Activated CD4-positive, alpha-beta T cell treated with anti-CD3 and anti-CD28 coated beads for 36 hours (primary cell): ENCODE measurements at regions of chr3 and their contacts with region 1.

Region 1: DNA sequence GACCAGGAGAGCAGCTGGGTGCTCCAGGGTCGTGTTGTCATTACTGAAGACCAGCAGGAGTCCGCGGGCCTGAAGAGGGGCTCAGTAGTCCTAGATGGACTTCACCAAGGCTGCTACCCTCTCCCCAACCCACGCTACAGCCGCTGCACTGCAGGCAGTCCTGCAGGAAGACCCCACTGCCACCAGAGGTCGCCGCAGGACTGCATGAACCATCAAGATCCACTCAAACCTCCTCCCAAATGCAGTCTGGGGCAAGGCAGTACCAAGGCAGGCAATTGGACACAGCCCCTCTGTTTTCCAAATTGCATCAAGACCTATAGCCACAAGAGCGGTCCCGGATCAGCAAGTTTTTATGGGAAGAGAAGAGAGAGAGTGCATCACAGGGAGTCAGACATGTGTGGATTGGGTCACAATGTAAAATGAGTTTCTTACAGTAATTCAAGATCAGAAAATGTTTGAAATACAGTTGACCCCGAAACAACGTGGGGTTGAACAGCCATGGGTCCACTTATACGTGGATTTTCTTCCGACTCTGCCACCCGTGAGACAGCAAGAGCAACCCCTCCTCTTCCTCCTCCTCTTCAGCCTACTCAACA is 46.7 kb downstream of the DZIP1L start:
- DNase-seq: peak; percentile 90
- ATAC-seq: peak; percentile 55
- H3K4me3 Mint-ChIP-seq: no peak overlapping the region
- H3K27ac Mint-ChIP-seq: no peak overlapping the region
- H3K4me1 Mint-ChIP-seq: peaks cover 14% of the 10 kb centered on the region
- H3K27me3 Mint-ChIP-seq: peaks cover 18% of the 10 kb centered on the region

Region 2: DNA sequence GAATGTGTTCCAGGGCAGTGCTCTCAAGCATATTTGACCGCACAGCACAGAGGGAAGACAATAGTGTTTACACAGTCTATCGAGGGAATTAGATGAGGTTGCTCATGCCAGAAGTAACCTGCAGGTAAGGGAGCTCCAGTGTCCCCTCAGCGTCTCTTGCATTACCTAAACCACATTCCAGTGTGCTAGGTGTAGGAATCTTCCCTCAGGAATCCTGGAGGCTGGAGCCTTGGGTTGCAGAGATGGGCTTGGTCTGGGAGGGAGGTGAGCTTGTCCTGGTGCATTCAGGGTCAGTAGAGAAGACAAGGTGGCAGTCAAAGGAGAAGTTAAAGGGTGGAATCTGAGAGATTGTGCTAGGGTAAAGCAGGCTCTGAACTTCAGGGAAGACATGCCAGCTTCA is 248.3 kb before region 1 on chr3:
- CTCF ChIA-PET with region 1: no interaction called
- POLR2A ChIA-PET with region 1: no interaction called
- intact Hi-C with region 1: no loop called
- DNase-seq: no peak
- ATAC-seq: no peak
- H3K4me3 Mint-ChIP-seq: no peak overlapping the region
- H3K27ac Mint-ChIP-seq: no peak overlapping the region
- H3K4me1 Mint-ChIP-seq: no peaks in the 10 kb centered on the region
- H3K27me3 Mint-ChIP-seq: peaks cover 6% of the 10 kb centered on the region

Region 3: GRCh38 chr3:138082085-138082991 is 13.7 kb after region 1 on chr3:
- CTCF ChIA-PET with region 1: interaction called, 12 read pairs
- POLR2A ChIA-PET with region 1: no interaction called
- intact Hi-C with region 1: loop called (anchors 1 to 2 kb)
- DNase-seq: peak; percentile 38
- ATAC-seq: peak; percentile 80
- H3K4me3 Mint-ChIP-seq: peak overlapping the region; percentile 1
- H3K27ac Mint-ChIP-seq: peak overlapping the region; percentile 11
- H3K4me1 Mint-ChIP-seq: peaks cover 36% of the 10 kb centered on the region
- H3K27me3 Mint-ChIP-seq: peaks cover 4% of the 10 kb centered on the region

Region 4: GRCh38 chr3:138118612-138119422 is 50.1 kb after region 1 on chr3:
- CTCF ChIA-PET with region 1: interaction called, 42 read pairs
- POLR2A ChIA-PET with region 1: no interaction called
- intact Hi-C with region 1: loop called (anchors 1 kb)
- DNase-seq: peak; percentile 77
- ATAC-seq: peak; percentile 72
- H3K4me3 Mint-ChIP-seq: no peak overlapping the region
- H3K27ac Mint-ChIP-seq: no peak overlapping the region
- H3K4me1 Mint-ChIP-seq: peaks cover 4% of the 10 kb centered on the region
- H3K27me3 Mint-ChIP-seq: peaks cover 20% of the 10 kb centered on the region

Region 5: DNA sequence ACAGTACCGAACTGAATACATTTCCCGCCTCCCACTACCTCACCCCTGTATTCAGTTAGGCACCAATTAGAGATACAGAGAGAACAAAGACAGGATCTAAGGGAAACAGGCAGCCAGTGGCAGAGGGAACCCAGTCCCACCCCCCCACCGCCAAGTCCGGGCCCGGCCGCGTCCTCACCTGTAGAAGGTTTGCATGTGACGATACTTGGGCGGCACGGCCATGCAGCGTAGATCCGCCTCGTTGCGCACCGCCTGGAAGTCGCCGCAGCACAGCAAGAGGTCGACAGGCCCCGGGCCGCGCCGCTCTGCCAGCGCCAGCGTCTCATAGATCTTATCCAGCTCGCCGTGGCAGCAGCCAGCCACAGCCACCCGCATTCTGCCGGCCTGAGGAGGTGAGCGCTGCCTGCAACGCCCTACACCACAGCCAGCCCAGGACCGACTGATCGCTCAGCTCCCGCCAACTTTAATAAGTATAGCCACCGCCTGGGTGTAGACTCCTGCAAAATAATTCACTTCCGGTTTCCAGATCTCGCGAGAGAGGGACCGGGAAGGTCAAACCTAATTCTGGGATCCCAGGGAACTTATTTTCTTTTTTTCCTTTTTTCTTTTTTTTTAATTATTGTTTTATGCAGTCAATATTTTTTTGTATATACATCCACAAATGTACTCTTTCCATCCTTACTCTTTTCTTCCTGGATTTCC is 105.9 kb after region 1 on chr3 and contains the start of gene DBR1:
- CTCF ChIA-PET with region 1: interaction called, 3 read pairs
- POLR2A ChIA-PET with region 1: no interaction called
- intact Hi-C with region 1: loop called (anchors 2 to 5 kb)
- DNase-seq: peak; percentile 85
- ATAC-seq: peak; percentile 85
- H3K4me3 Mint-ChIP-seq: peak within 1 kb of the TSS; percentile 89
- H3K27ac Mint-ChIP-seq: peak within 1 kb of the TSS; percentile 96
- H3K4me1 Mint-ChIP-seq: peaks cover 30% of the 10 kb centered on the region
- H3K27me3 Mint-ChIP-seq: no peaks in the 10 kb centered on the region
- total RNA-seq, gene DBR1: 16.4 to 22.0 TPM

Region 6: DNA sequence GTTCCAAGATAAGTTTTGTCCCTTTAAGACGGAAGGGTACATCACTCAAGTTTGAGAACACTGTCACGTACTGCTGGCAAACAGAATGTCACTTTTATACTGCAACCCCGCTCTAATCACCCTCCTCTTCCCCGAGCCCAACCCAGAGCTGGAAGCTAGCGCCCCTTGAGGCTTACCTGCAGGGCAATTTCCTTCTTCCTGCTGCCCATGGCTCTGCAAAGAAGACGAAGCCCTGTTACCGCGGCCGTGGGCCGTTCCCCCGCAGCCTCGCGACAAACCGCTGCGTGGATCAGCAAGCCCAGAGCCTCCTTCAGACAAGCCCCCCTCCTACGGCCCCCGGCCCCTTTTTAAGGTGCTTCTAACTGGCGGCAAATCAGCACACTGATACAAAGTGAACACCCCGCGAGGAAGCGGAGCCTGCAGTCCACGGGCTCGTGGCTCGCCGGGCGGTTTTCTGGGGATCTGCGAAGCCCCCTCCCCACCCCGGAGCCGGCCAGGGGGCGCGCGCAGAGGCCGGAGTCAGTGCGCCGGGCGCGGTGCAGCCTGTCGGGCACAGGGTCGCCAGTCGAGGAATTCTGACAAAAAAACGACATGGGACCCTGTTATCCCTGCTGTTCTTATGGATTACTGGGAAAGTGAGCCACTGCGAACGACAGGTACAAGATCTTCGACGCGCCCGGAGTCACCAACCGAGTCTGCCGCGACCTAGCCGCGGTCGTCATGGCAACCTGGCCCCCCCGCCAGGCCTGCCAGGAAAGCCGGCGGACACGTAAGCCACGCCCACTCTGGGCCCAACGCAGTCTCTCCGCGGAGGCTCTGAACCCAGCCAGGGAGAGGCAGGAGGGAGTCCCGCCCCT is 260.7 kb after region 1 on chr3 and contains the start of gene NME9:
- CTCF ChIA-PET with region 1: no interaction called
- POLR2A ChIA-PET with region 1: no interaction called
- intact Hi-C with region 1: loop called in 1 of 2 experiments (anchors 5 kb)
- DNase-seq: peak; percentile 93
- ATAC-seq: peak; percentile 90
- H3K4me3 Mint-ChIP-seq: peak within 1 kb of the TSS; percentile 76
- H3K27ac Mint-ChIP-seq: peak within 1 kb of the TSS; percentile 84
- H3K4me1 Mint-ChIP-seq: peaks cover 30% of the 10 kb centered on the region
- H3K27me3 Mint-ChIP-seq: no peaks in the 10 kb centered on the region
- total RNA-seq, gene NME9: 0.46 to 0.65 TPM

Region 7: DNA sequence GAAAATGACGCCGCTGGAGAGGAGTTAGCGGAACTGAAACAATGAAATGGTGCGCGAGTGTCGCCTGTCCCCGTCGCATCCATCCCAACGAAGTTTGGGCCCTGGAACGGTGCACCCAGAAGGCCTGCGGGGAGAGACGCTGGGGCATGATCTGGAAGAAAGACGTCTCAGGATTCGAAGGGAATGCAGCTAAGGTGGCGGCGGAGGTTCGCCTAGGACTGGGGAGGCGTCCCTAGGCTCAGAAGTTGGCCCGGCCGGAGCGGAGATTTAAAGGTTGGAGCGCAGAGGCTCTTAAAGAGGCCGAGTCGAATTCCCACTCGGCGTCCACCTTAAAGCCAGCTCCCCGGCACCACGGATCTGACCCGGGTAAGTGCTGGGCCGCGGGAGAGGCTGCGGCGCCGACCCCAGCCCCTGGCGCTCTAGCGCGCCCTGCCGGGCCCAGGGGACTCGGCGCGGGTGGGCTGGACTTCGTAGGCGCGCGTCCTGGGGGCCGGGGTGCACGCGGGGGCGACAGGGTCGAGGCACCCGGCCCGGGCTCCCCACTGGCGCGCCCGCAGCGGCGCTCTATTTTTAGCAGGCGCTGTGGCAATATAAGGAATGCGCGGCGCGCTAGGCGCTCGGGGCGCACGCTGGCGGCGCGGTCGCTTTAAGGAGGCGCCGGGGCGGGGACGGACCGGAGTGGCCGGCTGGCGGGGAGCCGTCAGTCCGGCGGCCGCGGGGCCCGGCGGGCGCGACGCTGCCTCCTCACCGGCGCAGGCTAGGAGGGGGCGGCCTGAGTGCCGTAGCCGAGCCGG is 279.5 kb after region 1 on chr3 and contains the start of gene MRAS:
- CTCF ChIA-PET with region 1: no interaction called
- POLR2A ChIA-PET with region 1: no interaction called
- intact Hi-C with region 1: loop called in 1 of 2 experiments (anchors 1 kb)
- DNase-seq: peak; percentile 59
- ATAC-seq: peak; percentile 81
- H3K4me3 Mint-ChIP-seq: peak within 1 kb of the TSS; percentile 84
- H3K27ac Mint-ChIP-seq: no peak within 1 kb of the TSS
- H3K4me1 Mint-ChIP-seq: peaks cover 6% of the 10 kb centered on the region
- H3K27me3 Mint-ChIP-seq: peaks cover 32% of the 10 kb centered on the region
- total RNA-seq, gene MRAS: 0.16 TPM

Region 8: GRCh38 chr3:138434276-138434874 is 365.7 kb after region 1 on chr3 and contains the start of gene ESYT3:
- CTCF ChIA-PET with region 1: no interaction called
- POLR2A ChIA-PET with region 1: no interaction called
- intact Hi-C with region 1: loop called in 1 of 2 experiments (anchors 10 kb)
- DNase-seq: peak; percentile 83
- ATAC-seq: peak; percentile 97
- H3K4me3 Mint-ChIP-seq: peak within 1 kb of the TSS; percentile 63
- H3K27ac Mint-ChIP-seq: no peak within 1 kb of the TSS
- H3K4me1 Mint-ChIP-seq: peaks cover 5% of the 10 kb centered on the region
- H3K27me3 Mint-ChIP-seq: peaks cover 43% of the 10 kb centered on the region
- total RNA-seq, gene ESYT3: 0.21 to 0.37 TPM